H1 (cell line): ENCODE measurements at regions of chr11 and their contacts with region 1.

Region 1: DNA sequence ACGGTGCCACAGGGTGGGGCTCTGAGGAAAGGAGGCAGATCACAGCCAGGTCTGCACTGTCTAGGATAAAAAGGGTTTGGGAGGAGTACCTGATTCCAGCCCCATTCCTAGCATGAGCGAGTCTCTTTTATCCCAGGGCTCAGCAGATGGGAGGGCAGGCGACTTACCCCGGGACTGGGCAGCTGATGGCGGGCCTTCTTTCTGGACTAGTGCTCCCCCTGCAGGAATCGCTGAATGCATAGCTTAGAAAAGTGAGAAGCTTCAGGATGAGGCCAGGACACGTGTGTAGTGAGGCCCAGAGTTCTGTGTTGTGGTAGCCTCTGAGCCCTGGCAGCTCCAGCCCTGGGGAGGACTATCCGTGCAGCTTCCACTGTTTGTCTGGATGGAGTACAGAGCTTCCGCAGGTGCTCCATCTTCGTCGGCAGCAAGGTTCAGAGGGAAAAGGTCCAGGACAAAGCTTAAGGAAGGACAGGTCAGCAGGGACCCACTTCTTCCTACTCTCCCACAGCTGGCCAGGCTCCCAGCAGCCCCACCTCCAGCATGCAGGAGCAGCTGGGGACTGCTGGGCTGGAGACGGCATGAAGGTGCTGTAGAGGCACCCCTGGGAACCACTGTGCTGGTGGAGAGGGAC is 30.4 kb downstream of the COMMD9 start:
- DNase-seq: peak; percentile 36 to 73
- H3K4me3 ChIP-seq: no peak overlapping the region
- H3K27ac ChIP-seq: no peak overlapping the region
- H3K4me1 ChIP-seq: peaks cover 0 to 1% (median 0%) of the 10 kb centered on the region in 4 experiments; a peak in 1 of 7 replicates
- H3K27me3 ChIP-seq: no peaks in the 10 kb centered on the region; a peak in 2 of 7 replicates
- CTCF ChIP-seq: peak; percentile 59 to 87 (median 80)
- EP300 ChIP-seq: no peak
- POLR2A ChIP-seq: no peak
- RAD21 ChIP-seq: peak; percentile 84 to 89

Region 2: GRCh38 chr11:36056160-36056751 is 202.6 kb before region 1 on chr11:
- CTCF ChIA-PET with region 1: interaction called, 13 read pairs
- POLR2A ChIA-PET with region 1: no interaction called
- DNase-seq: peak in 1 of 2 experiments; percentile 74
- H3K4me3 ChIP-seq: no peak overlapping the region
- H3K27ac ChIP-seq: no peak overlapping the region
- H3K4me1 ChIP-seq: peaks cover 0 to 14% (median 4%) of the 10 kb centered on the region in 4 experiments; a peak in 3 of 7 replicates
- H3K27me3 ChIP-seq: no peaks in the 10 kb centered on the region
- CTCF ChIP-seq: peak; percentile 85 to 94 (median 88)
- EP300 ChIP-seq: no peak
- POLR2A ChIP-seq: no peak
- RAD21 ChIP-seq: peak; percentile 85 to 89

Region 3: DNA sequence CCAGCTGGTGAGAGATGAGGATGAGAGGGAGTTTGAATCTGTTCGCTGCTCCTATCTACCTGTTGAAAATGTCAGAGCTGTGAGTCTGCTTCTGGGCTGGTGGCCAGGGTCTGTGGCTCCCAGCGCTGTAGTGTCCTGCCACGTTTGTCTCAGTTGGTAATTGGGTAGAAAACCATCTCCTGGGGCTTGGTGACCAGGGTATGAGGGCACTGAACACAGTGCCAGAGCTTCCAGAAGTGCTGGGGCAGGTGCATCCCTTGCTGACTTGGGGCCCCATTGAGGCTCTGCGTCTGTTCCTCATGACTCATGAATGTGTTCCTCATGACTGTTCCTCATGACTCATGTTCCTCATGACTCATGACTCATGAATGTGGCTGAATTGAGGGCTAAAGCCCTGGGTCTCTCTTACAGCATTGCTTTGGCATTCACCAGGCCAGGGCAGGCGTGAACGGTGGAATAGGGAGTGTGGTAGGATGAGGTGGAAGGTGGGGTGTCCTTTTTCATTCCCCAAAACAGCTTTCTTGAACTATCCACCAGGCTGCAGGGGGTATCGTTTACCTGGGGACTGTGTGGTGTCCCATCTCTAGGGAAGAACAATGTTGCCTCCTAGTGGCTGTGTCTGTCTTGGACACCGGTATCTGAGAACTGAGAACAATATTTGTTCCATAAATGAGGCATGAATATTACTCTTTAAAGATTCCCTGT is 109.2 kb before region 1 on chr11:
- CTCF ChIA-PET with region 1: interaction called, 34 read pairs
- POLR2A ChIA-PET with region 1: no interaction called
- DNase-seq: peak in 1 of 2 experiments; percentile 75
- H3K4me3 ChIP-seq: no peak overlapping the region
- H3K27ac ChIP-seq: peak overlapping the region; percentile 60; the same call in 1 of the 2 replicates
- H3K4me1 ChIP-seq: peaks cover 0 to 16% (median 4%) of the 10 kb centered on the region in 4 experiments; a peak in 4 of 7 replicates
- H3K27me3 ChIP-seq: no peaks in the 10 kb centered on the region
- CTCF ChIP-seq: peak; percentile 45 to 69 (median 53)
- EP300 ChIP-seq: no peak
- POLR2A ChIP-seq: no peak
- RAD21 ChIP-seq: peak; percentile 76 to 79

Region 4: DNA sequence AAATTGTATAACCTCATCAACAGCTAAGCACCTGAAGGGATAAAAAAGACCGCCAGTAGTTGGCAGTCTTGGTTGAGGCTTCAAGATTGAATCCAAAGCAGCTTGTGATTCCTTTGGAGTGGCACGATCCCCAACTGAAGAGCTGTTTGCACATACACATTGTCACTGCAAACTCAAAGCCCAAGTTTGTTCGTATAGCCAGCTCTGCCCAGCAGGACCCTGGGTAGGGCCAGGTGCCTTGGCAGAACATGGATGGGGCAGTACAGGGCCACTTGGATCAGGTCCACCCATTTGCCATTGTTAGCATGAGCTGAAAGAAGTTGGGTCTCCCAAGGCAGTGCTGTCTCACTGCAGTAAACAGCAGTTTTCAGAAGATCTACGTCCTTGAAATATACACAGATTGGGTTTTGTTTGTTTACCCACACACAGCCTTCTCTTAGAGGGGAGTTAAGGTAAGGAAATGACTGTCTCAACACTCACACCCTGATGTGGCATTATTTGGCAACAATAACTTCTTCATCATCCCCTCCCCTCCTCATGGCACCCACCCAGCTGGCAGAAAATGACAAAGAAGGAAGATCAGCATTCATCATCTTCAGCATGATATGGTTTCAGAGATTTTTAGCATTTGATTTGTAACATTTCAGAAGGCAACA is 102.6 kb before region 1 on chr11:
- CTCF ChIA-PET with region 1: interaction called, 34 read pairs
- POLR2A ChIA-PET with region 1: no interaction called
- DNase-seq: no peak
- H3K4me3 ChIP-seq: no peak overlapping the region
- H3K27ac ChIP-seq: no peak overlapping the region
- H3K4me1 ChIP-seq: peaks cover 0 to 11% (median 3%) of the 10 kb centered on the region in 4 experiments; a peak in 3 of 7 replicates
- H3K27me3 ChIP-seq: no peaks in the 10 kb centered on the region
- CTCF ChIP-seq: peak in 1 of 3 experiments; percentile 11; a peak in 1 of 4 replicates
- EP300 ChIP-seq: no peak
- POLR2A ChIP-seq: no peak
- RAD21 ChIP-seq: peak in 1 of 2 experiments; percentile 17; a peak in 2 of 4 replicates

Region 5: DNA sequence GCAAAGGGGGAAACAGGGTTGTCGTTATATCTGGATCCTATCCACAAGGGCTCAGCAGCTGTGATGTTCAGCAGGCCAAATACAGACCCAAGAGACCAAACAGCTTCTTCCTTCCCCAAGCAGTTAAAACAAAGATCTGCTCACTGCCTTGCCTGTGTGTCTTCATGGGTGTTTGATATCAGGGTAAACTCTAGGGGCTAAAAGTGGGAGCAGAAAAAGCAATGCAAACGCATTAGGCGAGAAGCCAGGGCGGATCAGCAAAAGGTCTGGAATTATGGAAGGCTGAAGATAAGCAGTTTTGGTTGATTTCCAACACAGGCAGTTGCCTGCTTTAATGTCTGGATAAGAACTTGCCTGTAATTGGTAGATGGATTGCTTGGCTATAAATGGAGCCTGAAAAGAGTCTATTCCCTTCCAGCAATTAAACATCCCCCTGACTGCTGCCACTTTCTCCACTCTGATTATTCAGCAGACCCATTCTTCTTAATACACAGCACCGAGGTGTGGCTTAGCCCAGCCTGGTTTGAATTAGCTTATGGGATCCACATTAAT is 95.9 kb before region 1 on chr11:
- CTCF ChIA-PET with region 1: interaction called, 34 read pairs
- POLR2A ChIA-PET with region 1: no interaction called
- DNase-seq: no peak
- H3K4me3 ChIP-seq: no peak overlapping the region
- H3K27ac ChIP-seq: no peak overlapping the region
- H3K4me1 ChIP-seq: peaks cover 0 to 5% (median 0%) of the 10 kb centered on the region in 4 experiments; a peak in 2 of 7 replicates
- H3K27me3 ChIP-seq: no peaks in the 10 kb centered on the region
- CTCF ChIP-seq: no peak
- EP300 ChIP-seq: no peak
- POLR2A ChIP-seq: no peak
- RAD21 ChIP-seq: no peak

Region 6: GRCh38 chr11:36205536-36205935 is 53.3 kb before region 1 on chr11:
- CTCF ChIA-PET with region 1: no interaction called
- POLR2A ChIA-PET with region 1: no interaction called
- DNase-seq: no peak
- H3K4me3 ChIP-seq: no peak overlapping the region
- H3K27ac ChIP-seq: no peak overlapping the region
- H3K4me1 ChIP-seq: no peaks in the 10 kb centered on the region
- H3K27me3 ChIP-seq: no peaks in the 10 kb centered on the region
- CTCF ChIP-seq: no peak
- EP300 ChIP-seq: no peak
- POLR2A ChIP-seq: no peak
- RAD21 ChIP-seq: no peak

Region 7: GRCh38 chr11:36240801-36241200 is 18.0 kb before region 1 on chr11:
- CTCF ChIA-PET with region 1: interaction called, 13 read pairs
- POLR2A ChIA-PET with region 1: no interaction called
- DNase-seq: no peak
- H3K4me3 ChIP-seq: no peak overlapping the region
- H3K27ac ChIP-seq: no peak overlapping the region
- H3K4me1 ChIP-seq: no peaks in the 10 kb centered on the region
- H3K27me3 ChIP-seq: no peaks in the 10 kb centered on the region
- CTCF ChIP-seq: no peak
- EP300 ChIP-seq: no peak
- POLR2A ChIP-seq: no peak
- RAD21 ChIP-seq: no peak

Region 8: GRCh38 chr11:36273110-36273509 is 14.3 kb after region 1 on chr11:
- CTCF ChIA-PET with region 1: interaction called, 14 read pairs
- POLR2A ChIA-PET with region 1: no interaction called
- DNase-seq: no peak
- H3K4me3 ChIP-seq: no peak overlapping the region
- H3K27ac ChIP-seq: no peak overlapping the region
- H3K4me1 ChIP-seq: no peaks in the 10 kb centered on the region
- H3K27me3 ChIP-seq: no peaks in the 10 kb centered on the region
- CTCF ChIP-seq: no peak
- EP300 ChIP-seq: no peak
- POLR2A ChIP-seq: no peak
- RAD21 ChIP-seq: no peak